K562 (cell line): ENCODE measurements at regions of chrX and their contacts with region 1.

Region 1: GRCh38 chrX:17689971-17690409 is 47.3 kb upstream of the SCML1 start:
- DNase-seq: peak; percentile 22 to 35 (median 32)
- ATAC-seq: peak; percentile 79
- H3K4me3 ChIP-seq: no peak overlapping the region
- H3K27ac ChIP-seq: no peak overlapping the region
- H3K4me1 ChIP-seq: no peaks in the 10 kb centered on the region
- H3K27me3 ChIP-seq: no peaks in the 10 kb centered on the region
- CTCF ChIP-seq: peak; percentile 41 to 62 (median 51)
- EP300 ChIP-seq: no peak
- POLR2A ChIP-seq: no peak
- RAD21 ChIP-seq: peak; percentile 49 to 65

Region 2: GRCh38 chrX:17120816-17121215 is 569.2 kb before region 1 on chrX:
- CTCF ChIA-PET with region 1: no interaction called
- POLR2A ChIA-PET with region 1: no interaction called
- in situ Hi-C with region 1: no loop called
- intact Hi-C with region 1: loop called (anchors 10 kb)
- DNase-seq: no peak
- ATAC-seq: no peak
- H3K4me3 ChIP-seq: no peak overlapping the region
- H3K27ac ChIP-seq: no peak overlapping the region
- H3K4me1 ChIP-seq: no peaks in the 10 kb centered on the region
- H3K27me3 ChIP-seq: no peaks in the 10 kb centered on the region
- CTCF ChIP-seq: no peak
- EP300 ChIP-seq: no peak
- POLR2A ChIP-seq: no peak
- RAD21 ChIP-seq: no peak

Region 3: DNA sequence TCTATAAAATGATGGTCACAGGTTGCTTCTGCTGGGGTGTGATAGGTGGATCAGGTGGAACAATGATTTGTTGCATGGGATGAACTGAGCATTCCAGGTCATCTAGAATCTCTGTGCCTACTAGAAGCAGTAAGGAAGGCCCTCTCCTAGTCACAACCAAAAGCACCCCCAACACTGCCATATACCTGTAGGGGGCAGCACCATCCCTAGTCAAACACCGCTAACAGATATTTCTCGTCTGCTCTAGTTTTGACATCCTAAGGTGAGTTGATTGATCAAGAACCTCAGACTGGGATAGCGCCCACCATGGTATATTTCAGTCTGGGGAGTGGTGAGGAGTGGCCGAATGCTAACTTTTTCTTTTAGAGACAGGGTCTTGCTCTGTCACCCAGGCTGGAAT is 154.8 kb before region 1 on chrX:
- CTCF ChIA-PET with region 1: no interaction called
- POLR2A ChIA-PET with region 1: no interaction called
- in situ Hi-C with region 1: no loop called
- intact Hi-C with region 1: loop called (anchors 2 kb)
- DNase-seq: peak; percentile 35 to 43 (median 41)
- ATAC-seq: peak; percentile 84
- H3K4me3 ChIP-seq: no peak overlapping the region
- H3K27ac ChIP-seq: no peak overlapping the region
- H3K4me1 ChIP-seq: no peaks in the 10 kb centered on the region
- H3K27me3 ChIP-seq: no peaks in the 10 kb centered on the region
- CTCF ChIP-seq: peak; percentile 52 to 60 (median 55)
- EP300 ChIP-seq: no peak
- POLR2A ChIP-seq: no peak
- RAD21 ChIP-seq: peak; percentile 24 to 43; a peak in 3 of 4 replicates

Region 4: GRCh38 chrX:19174401-19175025 is 1484.5 kb after region 1 on chrX:
- CTCF ChIA-PET with region 1: no interaction called
- POLR2A ChIA-PET with region 1: no interaction called
- in situ Hi-C with region 1: no loop called
- intact Hi-C with region 1: no loop called
- DNase-seq: no peak
- ATAC-seq: no peak
- H3K4me3 ChIP-seq: no peak overlapping the region
- H3K27ac ChIP-seq: no peak overlapping the region
- H3K4me1 ChIP-seq: no peaks in the 10 kb centered on the region
- H3K27me3 ChIP-seq: no peaks in the 10 kb centered on the region
- CTCF ChIP-seq: no peak
- EP300 ChIP-seq: no peak
- POLR2A ChIP-seq: no peak
- RAD21 ChIP-seq: no peak